Right ventricle myocardium superior (tissue), 1 donor: ENCODE measurements at regions of chr16 and their contacts with region 1.

Region 1: DNA sequence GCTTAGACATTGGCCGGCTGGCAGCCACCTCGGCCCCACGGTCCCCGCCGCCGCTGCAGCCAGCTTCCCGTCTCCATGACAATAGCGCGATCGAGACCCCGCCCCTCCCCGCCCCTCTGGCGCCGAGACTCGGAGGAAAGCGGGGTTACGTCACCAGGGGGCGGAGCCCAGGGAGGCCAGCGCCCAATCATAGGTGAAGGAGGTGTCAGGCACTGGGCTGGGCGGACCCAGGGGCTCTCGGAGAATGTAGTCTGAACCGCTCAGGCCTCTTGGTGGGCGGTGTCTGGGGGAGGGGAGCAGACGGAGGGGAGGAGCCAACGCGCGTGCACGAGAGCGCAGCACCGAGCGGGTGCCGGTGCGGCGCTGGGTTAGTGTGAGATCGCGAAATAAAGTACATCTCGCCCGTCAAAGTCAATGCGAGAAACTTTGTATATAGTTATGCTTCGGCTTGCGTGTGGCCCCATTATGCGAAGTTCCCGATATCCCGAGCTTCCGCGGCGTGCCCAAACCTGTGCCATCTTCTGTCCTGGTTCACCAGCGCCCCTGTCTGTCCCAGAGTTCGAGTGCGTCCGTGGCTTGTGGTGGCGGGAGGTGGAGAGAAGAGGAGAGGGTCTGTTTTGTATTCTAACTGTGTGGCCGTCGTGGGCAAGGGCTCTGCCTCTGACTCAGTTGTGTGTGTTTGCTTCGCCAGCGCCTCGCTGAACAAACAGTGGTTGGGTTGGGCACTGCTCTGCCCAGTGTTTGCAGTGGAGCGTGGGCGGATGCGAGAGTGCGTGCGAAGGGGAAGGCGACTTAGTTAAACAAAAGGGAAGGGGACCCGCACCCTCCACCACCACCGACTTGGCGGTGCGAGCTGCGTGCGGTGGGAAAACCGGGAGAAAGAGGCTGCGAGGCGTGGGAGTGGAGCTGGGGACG is 1.3 kb upstream of the IRX5 start:
- DNase-seq: peak; percentile 100
- ATAC-seq: peak; percentile 92

Region 2: DNA sequence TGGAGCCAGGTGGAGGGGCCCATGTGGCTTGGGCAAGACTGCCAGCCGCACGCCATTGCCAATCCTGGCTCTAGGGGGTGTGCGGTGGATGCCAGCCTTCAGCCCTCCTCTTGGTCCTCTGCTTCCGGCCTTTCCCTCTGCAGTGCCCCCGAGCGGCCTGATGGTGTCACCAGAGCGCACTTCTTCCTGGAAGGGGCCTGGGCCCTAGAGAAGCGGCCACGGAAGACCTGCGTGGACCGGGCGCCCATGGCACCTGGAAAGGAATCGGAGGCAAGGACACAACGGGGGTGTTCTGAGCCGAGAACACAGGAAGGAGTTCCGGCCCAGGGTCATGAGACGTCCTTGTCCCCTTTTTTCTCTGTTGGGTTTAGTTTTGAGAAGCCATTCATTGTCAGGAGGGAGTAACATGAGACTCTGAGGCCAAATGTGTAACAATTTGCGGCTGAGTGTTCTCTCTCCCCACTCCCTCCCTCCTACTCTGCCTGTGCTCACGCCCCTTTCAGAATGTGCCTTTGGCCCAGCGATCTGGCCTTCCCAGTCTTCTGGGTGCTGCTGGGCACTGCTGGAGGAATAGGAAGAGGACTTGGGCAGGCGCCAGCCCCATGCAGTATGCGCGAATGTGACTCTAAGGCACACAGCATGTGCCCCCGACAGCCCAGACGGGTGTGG is 735.5 kb before region 1 on chr16:
- intact Hi-C with region 1: loop called (anchors 10 kb)
- DNase-seq: peak; percentile 90
- ATAC-seq: peak; percentile 91

Region 3: GRCh38 chr16:54503011-54503855 is 426.1 kb before region 1 on chr16:
- intact Hi-C with region 1: loop called (anchors 10 kb)
- DNase-seq: peak; percentile 81
- ATAC-seq: peak; percentile 94

Region 4: DNA sequence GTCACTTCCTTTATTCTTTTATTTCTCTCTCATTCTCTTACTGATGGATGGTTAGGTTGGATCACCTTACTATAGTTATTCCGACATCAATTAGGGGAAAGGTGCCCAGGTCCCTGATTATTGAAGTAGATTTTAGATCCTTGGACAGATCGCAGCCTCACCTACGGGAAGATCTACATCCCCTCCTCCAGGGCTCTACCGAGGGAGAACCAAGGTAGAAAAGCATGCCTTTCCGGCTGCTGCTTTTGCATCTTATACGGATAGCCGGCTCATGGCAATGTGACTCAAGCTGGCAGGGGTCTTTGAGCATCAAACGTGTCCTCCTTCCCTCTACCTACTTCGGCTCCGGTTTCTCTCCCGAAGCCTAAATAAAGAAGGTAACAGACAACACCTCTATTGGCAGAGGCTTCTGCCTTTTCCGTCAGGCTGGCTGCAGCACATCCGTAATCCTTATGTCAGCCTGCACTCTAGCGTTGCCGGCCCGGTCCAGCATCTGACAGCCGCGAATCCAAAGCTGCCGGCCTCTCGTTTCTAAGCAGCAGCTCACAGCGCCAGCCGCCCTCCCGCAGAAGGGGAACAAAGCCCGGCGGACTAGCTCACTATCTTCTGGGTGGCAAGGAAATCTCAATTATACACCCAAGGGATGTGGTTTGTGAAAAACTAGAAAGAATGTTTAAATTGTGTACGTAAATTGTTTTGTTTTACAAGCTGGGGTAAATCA is 441.6 kb after region 1 on chr16:
- intact Hi-C with region 1: loop called (anchors 10 kb)
- DNase-seq: peak; percentile 82
- ATAC-seq: peak; percentile 90